ENCODE measurements at regions of chr11 and their contacts with region 1.

Region 1: GRCh38 chr11:64489831-64490441 is 101.1 kb upstream of the SLC22A12 start:
- DNase-seq: peak; percentile 84
- H3K4me3 ChIP-seq: no peak overlapping the region; a peak in 1 of 4 replicates
- H3K27ac ChIP-seq: no peak overlapping the region
- H3K4me1 ChIP-seq: peaks cover 0 to 2% of the 10 kb centered on the region in 2 experiments; a peak in 1 of 4 replicates
- H3K27me3 ChIP-seq: peaks cover 10% of the 10 kb centered on the region; the same call in 1 of the 2 replicates
- CTCF ChIP-seq: peak; percentile 66
- EP300 ChIP-seq: no peak
- RAD21 ChIP-seq: peak; percentile 77

Region 2: GRCh38 chr11:64477675-64478074 is 12.3 kb before region 1 on chr11:
- CTCF ChIA-PET with region 1: interaction called, 10 read pairs
- POLR2A ChIA-PET with region 1: no interaction called
- DNase-seq: no peak
- H3K4me3 ChIP-seq: no peak overlapping the region
- H3K27ac ChIP-seq: no peak overlapping the region
- H3K4me1 ChIP-seq: no peaks in the 10 kb centered on the region; a peak in 1 of 4 replicates
- H3K27me3 ChIP-seq: peaks cover 18% of the 10 kb centered on the region; the same call in 1 of the 2 replicates
- CTCF ChIP-seq: no peak
- EP300 ChIP-seq: no peak
- RAD21 ChIP-seq: no peak

Region 3: DNA sequence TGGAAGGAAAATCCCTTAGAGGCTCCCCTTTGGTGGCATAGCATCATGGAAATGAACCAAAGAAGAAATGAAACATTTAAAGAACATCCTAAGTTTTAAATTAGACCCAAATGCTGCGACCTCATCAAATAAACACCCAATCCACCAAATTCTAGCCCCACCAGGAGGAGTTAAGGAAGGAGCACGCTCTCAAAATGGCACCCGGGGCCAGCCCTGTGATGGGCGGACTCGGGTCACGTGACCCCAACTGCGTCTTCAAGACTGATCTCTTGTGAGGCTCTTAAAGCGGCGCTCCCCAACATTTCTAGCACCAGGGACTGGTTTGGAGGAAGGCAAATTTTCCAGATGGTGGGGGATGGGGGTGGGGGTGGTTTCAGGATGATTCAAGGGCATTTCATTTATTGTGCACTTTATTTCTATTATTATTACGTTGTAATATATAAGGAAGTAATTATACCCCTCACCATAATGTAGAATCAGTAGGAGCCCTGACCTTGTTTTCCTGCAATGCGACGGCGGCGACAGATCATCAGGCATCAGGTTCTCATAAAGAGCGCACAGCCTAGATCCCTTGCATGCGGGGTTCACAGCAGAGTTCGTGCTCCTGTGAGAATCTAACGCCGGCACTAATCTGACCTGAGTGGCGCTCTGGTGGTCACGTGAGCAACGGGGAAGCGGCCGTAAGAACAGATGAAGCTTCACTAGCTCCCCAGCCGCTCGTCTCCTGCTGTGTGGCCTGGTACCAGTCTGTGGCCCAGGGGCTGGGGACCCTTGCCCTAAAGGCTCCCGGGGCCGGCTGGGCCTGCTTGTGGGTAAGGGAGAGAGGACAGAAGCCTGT is 10.5 kb after region 1 on chr11:
- CTCF ChIA-PET with region 1: interaction called, 10 read pairs
- POLR2A ChIA-PET with region 1: no interaction called
- DNase-seq: no peak
- H3K4me3 ChIP-seq: no peak overlapping the region
- H3K27ac ChIP-seq: no peak overlapping the region
- H3K4me1 ChIP-seq: peaks cover 0 to 3% of the 10 kb centered on the region in 2 experiments; a peak in 1 of 4 replicates
- H3K27me3 ChIP-seq: no peaks in the 10 kb centered on the region
- CTCF ChIP-seq: no peak
- EP300 ChIP-seq: no peak
- RAD21 ChIP-seq: no peak

Region 4: GRCh38 chr11:64583296-64584232 is 93.6 kb after region 1 on chr11:
- CTCF ChIA-PET with region 1: no interaction called
- POLR2A ChIA-PET with region 1: no interaction called
- DNase-seq: no peak
- H3K4me3 ChIP-seq: no peak overlapping the region
- H3K27ac ChIP-seq: no peak overlapping the region
- H3K4me1 ChIP-seq: no peaks in the 10 kb centered on the region
- H3K27me3 ChIP-seq: peaks cover 14% of the 10 kb centered on the region; the same call in 1 of the 2 replicates
- CTCF ChIP-seq: no peak
- EP300 ChIP-seq: no peak
- RAD21 ChIP-seq: no peak

Region 5: GRCh38 chr11:64644647-64645275 is 154.8 kb after region 1 on chr11:
- CTCF ChIA-PET with region 1: interaction called, 104 read pairs
- POLR2A ChIA-PET with region 1: no interaction called
- DNase-seq: peak; percentile 63
- H3K4me3 ChIP-seq: no peak overlapping the region
- H3K27ac ChIP-seq: no peak overlapping the region
- H3K4me1 ChIP-seq: peaks cover 0 to 37% of the 10 kb centered on the region in 2 experiments; a peak in 1 of 4 replicates
- H3K27me3 ChIP-seq: peaks cover 48% of the 10 kb centered on the region
- CTCF ChIP-seq: no peak
- EP300 ChIP-seq: no peak
- RAD21 ChIP-seq: peak; percentile 30; the same call in 1 of the 2 replicates

Region 6: GRCh38 chr11:64659417-64660144 is 169.6 kb after region 1 on chr11:
- CTCF ChIA-PET with region 1: interaction called, 104 read pairs
- POLR2A ChIA-PET with region 1: no interaction called
- DNase-seq: no peak
- H3K4me3 ChIP-seq: no peak overlapping the region
- H3K27ac ChIP-seq: no peak overlapping the region
- H3K4me1 ChIP-seq: peaks cover 0 to 5% of the 10 kb centered on the region in 2 experiments; a peak in 2 of 4 replicates
- H3K27me3 ChIP-seq: no peaks in the 10 kb centered on the region
- CTCF ChIP-seq: no peak
- EP300 ChIP-seq: no peak
- RAD21 ChIP-seq: no peak

Measured in SK-N-SH (cell line).